ENCODE measurements at regions of chr17 and their contacts with region 1.

Region 1: GRCh38 chr17:34361478-34362061 is 1.5 kb downstream of the CCL1 start:
- DNase-seq: peak; percentile 40
- H3K4me3 ChIP-seq: no peak overlapping the region
- CTCF ChIP-seq: peak; percentile 96

Region 2: DNA sequence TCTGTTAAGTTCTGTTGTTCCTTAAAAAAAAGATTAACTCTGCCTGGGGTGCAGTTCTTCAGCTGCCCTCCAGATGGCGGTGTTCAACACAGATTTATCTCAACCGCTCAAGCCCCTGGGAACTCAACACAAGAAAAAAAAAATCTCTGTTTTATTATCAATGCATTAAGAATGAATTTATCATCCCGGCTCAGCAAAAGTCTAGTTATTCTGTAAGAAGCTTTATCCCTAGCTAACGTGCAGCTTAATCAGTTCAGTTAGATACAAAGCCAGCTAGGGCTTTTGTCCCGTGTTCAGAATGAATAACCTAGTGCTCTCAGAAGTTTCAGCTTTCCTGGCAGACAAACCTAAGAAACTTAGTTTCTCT is 582.4 kb before region 1 on chr17:
- CTCF ChIA-PET with region 1: interaction called, 20 read pairs
- POLR2A ChIA-PET with region 1: no interaction called
- DNase-seq: peak; percentile 24
- H3K4me3 ChIP-seq: no peak overlapping the region
- CTCF ChIP-seq: peak; percentile 75

Region 3: DNA sequence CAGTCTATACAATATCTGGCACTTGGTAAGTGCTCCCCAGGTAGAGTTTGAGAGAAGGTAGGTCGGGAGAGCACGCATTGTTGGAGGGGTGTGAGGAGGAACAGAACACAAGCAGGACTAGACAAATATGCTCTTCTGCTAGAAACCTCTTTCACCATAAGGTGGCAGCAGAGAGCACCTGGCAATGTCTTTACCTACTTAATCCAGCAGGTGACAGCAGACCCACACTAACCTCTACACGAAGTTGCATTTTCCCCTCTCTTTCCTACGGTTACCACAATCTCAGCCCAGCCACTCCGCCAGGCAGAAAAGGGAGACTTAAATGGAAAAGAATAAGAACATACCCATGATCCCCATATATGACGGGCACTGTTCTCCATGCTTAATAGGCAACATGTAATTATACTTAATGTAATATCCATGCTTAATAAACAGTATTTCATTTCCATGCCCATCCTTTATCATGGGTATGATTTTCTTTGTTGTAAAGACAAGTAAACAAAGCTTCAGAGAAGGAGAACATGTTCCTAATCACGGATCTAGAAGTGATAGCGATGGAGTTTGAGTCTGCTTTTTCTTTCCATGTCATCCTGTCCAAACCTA is 161.5 kb before region 1 on chr17:
- CTCF ChIA-PET with region 1: interaction called, 811 read pairs
- POLR2A ChIA-PET with region 1: no interaction called
- DNase-seq: peak; percentile 41
- H3K4me3 ChIP-seq: no peak overlapping the region
- CTCF ChIP-seq: peak; percentile 100

Region 4: DNA sequence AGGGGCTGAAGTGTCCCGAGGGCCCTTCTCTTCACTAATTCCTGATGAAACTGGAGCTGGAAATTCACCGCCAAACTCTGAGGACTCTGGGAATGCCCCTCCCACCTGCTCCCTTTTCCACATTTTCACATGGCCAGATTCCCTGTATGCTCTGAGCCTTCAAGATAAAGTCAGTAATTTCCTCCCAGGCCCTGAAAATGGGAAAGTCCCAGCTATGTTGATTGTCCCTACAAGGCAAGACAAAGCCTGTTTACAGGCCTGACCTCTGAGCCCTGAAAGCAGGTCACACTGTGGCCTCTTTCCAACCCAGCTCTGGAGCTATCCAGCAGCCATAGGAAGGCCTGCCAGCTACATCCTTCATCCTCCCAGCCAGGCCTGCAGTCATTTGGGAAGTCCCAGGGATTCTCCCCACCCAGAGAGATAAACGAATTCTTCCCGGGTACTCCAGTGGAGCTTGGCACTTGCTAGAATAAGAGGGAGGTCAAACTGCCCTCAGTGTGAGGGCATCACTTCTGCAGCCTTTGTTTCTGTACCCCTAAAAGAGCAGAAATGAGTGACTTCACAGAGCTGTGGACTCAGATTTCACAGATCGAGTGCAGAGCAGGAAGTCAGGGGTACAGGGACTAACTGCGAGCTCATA is 126.1 kb before region 1 on chr17:
- CTCF ChIA-PET with region 1: interaction called, 23 read pairs
- POLR2A ChIA-PET with region 1: no interaction called
- DNase-seq: no peak
- H3K4me3 ChIP-seq: no peak overlapping the region
- CTCF ChIP-seq: no peak

Region 5: DNA sequence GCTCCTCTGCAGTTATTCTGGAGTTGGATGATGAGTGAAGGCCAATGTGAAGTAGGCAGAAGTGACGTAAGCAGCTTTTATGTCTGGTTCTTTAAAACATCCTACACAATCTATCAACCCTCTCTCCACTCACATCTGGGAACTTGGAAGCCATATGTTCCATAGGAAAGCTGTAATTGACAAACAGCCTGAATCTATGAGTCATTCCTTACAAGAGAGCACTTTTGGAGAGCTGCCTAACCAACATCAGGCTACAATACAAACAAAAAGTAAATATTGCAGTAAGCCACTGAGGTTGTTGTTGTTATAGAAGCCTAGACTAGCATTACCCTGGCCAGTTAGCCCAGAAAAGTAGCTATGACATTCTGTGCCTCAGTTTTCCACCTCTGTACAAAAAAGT is 85.7 kb before region 1 on chr17:
- CTCF ChIA-PET with region 1: interaction called, 19 read pairs
- POLR2A ChIA-PET with region 1: no interaction called
- DNase-seq: peak; percentile 79
- H3K4me3 ChIP-seq: no peak overlapping the region
- CTCF ChIP-seq: no peak

Region 6: GRCh38 chr17:34337701-34338100 is 23.9 kb before region 1 on chr17:
- CTCF ChIA-PET with region 1: interaction called, 30 read pairs
- POLR2A ChIA-PET with region 1: no interaction called
- DNase-seq: no peak
- H3K4me3 ChIP-seq: no peak overlapping the region
- CTCF ChIP-seq: no peak